ENCODE measurements at regions of chr15 and their contacts with region 1.

Region 1: GRCh38 chr15:88897456-88898194 is 2.3 kb upstream of the HAPLN3 start:
- DNase-seq: peak; percentile 80 to 88
- ATAC-seq: peak; percentile 66 to 81
- H3K4me3 ChIP-seq: no peak overlapping the region
- H3K27ac ChIP-seq: peak overlapping the region; percentile 35 to 62; a peak in 5 of 6 replicates
- H3K4me1 ChIP-seq: peaks cover 32% of the 10 kb centered on the region
- CTCF ChIP-seq: peak; percentile 47
- EP300 ChIP-seq: no peak
- POLR2A ChIP-seq: no peak
- RAD21 ChIP-seq: peak; percentile 37; a peak in 3 of 5 replicates

Region 2: DNA sequence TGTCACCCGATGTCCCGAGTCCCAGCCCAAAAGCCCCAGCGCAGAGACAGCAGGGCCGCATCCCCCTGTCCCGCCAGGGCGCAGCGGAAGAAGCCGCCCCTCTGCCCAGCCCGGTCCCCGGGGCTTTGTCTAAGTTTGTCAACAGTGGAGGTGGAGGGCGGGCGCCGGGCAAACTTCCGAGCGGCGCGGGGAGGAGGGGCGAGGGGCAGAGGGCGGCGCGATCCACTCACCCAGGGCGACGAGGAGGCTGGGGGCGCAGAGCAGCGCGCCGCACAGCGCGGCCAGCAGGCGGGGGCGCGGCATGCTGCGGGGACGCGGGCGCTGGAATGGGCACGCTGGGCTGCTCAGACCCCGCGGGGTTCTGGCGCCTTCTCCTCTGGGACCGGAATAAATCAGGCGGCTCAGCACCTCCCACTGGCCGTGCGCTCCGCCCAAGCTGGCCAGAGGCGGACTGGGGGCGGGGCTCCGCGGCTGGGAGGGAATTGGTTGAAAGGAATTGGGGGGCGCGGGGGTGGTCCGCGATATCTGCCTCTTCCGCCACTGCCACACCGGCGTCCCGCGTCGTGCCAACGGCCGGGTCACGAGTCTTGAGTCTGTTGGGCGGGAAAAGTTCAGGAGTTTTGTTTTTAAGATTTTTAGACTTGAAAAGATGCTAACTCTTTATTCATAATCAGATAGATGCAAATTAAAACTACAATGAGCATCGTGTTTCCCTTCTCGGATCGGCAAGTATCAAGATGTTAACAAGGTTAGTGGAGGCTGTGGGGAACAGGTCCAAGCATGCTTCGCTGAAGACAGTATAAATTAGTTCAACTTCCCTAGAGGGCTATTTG is 15.6 kb after region 1 on chr15 and contains the start of gene MFGE8:
- CTCF ChIA-PET with region 1: interaction called, 138 read pairs
- POLR2A ChIA-PET with region 1: interaction called, 5 read pairs
- DNase-seq: peak; percentile 77 to 87
- ATAC-seq: peak; percentile 84 to 90
- H3K4me3 ChIP-seq: peak within 1 kb of the TSS; percentile 66
- H3K27ac ChIP-seq: peak within 1 kb of the TSS; percentile 73 to 89
- H3K4me1 ChIP-seq: peaks cover 26% of the 10 kb centered on the region
- CTCF ChIP-seq: no peak
- EP300 ChIP-seq: no peak
- POLR2A ChIP-seq: peak; percentile 96
- RAD21 ChIP-seq: 0 out of 5 replicates have a peak, but pooled peaks of 1 of the 2 experiments have one; percentile 20
- polyA plus RNA-seq, gene MFGE8: 206 and 213 TPM in 2 replicates